ENCODE measurements at regions of chr16 and their contacts with region 1.

Region 1: DNA sequence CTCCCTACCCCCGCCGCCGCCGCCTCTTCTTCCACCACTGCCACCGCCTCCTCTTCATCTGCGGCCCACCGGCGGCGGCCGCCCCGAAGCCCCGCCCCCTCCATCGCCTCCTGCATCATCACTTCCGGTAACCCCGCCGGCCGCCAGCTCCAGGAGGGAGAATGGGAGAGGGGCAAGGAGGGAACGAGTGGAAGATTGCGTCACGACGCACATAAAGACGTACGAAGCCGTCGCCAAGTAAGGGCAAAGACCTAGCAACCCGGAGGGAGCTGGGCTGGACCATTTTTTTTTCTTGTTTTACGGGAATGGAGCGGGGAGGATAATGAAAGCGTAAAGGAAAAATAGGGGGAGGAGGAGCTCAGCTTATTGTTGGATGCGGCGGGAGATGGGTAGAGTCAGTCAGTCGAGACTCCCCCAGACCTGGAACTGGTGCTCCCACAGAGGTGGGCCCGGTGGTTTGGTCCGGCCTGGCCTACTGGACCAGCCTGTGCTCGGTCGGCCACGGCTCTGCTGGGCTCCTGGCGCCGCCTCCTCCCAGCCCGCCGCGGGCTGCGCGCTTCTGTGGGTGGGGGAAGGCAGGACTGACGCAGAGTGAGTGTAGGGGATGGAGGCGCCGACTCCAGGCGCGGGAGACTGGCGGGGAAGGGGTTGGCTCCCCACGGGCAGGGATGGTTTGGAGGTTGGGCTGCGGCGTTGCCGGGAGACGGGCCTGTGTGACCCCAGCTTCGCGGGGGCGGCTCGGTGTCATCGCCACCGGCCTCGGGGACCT is at the starts of genes DCUN1D3 and LYRM1:
- DNase-seq: peak; percentile 92
- ATAC-seq: peak; percentile 76
- H3K4me3 ChIP-seq: peak within 1 kb of the TSS; percentile 89 to 96 (median 95)
- H3K4me3 Mint-ChIP-seq: peak within 1 kb of the TSS; percentile 94
- H3K27ac ChIP-seq: peak within 1 kb of the TSS; percentile 77 to 96
- H3K27ac Mint-ChIP-seq: peak within 1 kb of the TSS; percentile 95
- H3K4me1 ChIP-seq: peaks cover 49 to 52% of the 10 kb centered on the region in 2 donors
- H3K4me1 Mint-ChIP-seq: peaks cover 68% of the 10 kb centered on the region
- H3K27me3 ChIP-seq: no peaks in the 10 kb centered on the region
- H3K27me3 Mint-ChIP-seq: no peaks in the 10 kb centered on the region
- CTCF ChIP-seq: no peak
- total RNA-seq, gene DCUN1D3: 5.0 and 5.7 TPM in 2 replicates
- total RNA-seq, gene LYRM1: 19.0 and 21.8 TPM in 2 replicates

Region 2: GRCh38 chr16:20874088-20874581 is 26.3 kb before region 1 on chr16:
- CTCF ChIA-PET with region 1: interaction called, 3 read pairs
- POLR2A ChIA-PET with region 1: interaction called, 6 read pairs
- intact Hi-C with region 1: loop called (anchors 1 kb)
- DNase-seq: no peak
- ATAC-seq: no peak
- H3K4me3 ChIP-seq: peak overlapping the region in 3 of 5 experiments; percentile 38 to 61 (median 41)
- H3K4me3 Mint-ChIP-seq: peak overlapping the region; percentile 51
- H3K27ac ChIP-seq: peak overlapping the region; percentile 57 to 62
- H3K27ac Mint-ChIP-seq: peak overlapping the region; percentile 85
- H3K4me1 ChIP-seq: peaks cover 26 to 27% of the 10 kb centered on the region in 2 donors
- H3K4me1 Mint-ChIP-seq: peaks cover 31% of the 10 kb centered on the region
- H3K27me3 ChIP-seq: no peaks in the 10 kb centered on the region
- H3K27me3 Mint-ChIP-seq: no peaks in the 10 kb centered on the region
- CTCF ChIP-seq: no peak

Region 3: GRCh38 chr16:21092951-21093350 is 192.5 kb after region 1 on chr16:
- CTCF ChIA-PET with region 1: no interaction called
- POLR2A ChIA-PET with region 1: interaction called, 11 read pairs
- intact Hi-C with region 1: no loop called
- DNase-seq: no peak
- ATAC-seq: no peak
- H3K4me3 ChIP-seq: no peak overlapping the region
- H3K4me3 Mint-ChIP-seq: no peak overlapping the region
- H3K27ac ChIP-seq: no peak overlapping the region
- H3K27ac Mint-ChIP-seq: no peak overlapping the region
- H3K4me1 ChIP-seq: no peaks in the 10 kb centered on the region
- H3K4me1 Mint-ChIP-seq: no peaks in the 10 kb centered on the region
- H3K27me3 ChIP-seq: peaks cover 0 to 22% (median 1%) of the 10 kb centered on the region in 4 experiments
- H3K27me3 Mint-ChIP-seq: peaks cover 31% of the 10 kb centered on the region
- CTCF ChIP-seq: no peak